Caco-2 (cell line): ENCODE measurements at regions of chr14 and their contacts with region 1.

Region 1: GRCh38 chr14:67619446-67620216 is at the start of gene ARG2:
- DNase-seq: peak; percentile 99
- H3K4me3 ChIP-seq: peak within 1 kb of the TSS; percentile 63
- H3K4me3 Mint-ChIP-seq: peak within 1 kb of the TSS; percentile 90
- H3K27ac Mint-ChIP-seq: peak within 1 kb of the TSS; percentile 97
- H3K4me1 ChIP-seq: peaks cover 5% of the 10 kb centered on the region; the same call in 1 of the 2 replicates
- H3K4me1 Mint-ChIP-seq: peaks cover 16% of the 10 kb centered on the region
- H3K27me3 ChIP-seq: no peaks in the 10 kb centered on the region
- H3K27me3 Mint-ChIP-seq: peaks cover 2% of the 10 kb centered on the region
- CTCF ChIP-seq: peak in 1 of 2 experiments; percentile 26
- total RNA-seq, gene ARG2: 22.6 and 22.8 TPM in 2 replicates

Region 2: DNA sequence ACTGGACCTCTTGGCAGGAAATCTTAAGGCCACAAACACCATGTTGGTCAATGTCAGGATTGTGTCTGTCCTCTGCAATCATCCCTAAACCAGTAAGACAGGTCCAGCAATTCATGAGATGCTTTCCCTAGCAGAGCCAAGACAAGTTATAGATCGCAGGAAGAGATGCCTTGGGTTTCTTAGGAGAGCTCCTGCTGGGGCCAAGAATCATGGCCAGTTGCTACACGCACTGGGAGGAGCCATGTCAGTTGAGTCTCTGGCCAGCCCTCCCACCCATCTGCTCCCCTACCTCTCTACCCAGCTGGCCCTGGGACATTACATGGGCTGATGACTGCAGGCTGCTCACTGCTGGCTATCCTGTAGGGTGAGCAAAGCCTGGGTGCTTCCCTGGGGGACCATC is 72.3 kb before region 1 on chr14:
- CTCF ChIA-PET with region 1: no interaction called
- POLR2A ChIA-PET with region 1: no interaction called
- intact Hi-C with region 1: no loop called
- DNase-seq: no peak
- H3K4me3 ChIP-seq: no peak overlapping the region
- H3K4me3 Mint-ChIP-seq: no peak overlapping the region
- H3K27ac Mint-ChIP-seq: no peak overlapping the region
- H3K4me1 ChIP-seq: 0 out of 2 replicates have a peak, but pooled peaks cover 1% of the 10 kb centered on the region
- H3K4me1 Mint-ChIP-seq: no peaks in the 10 kb centered on the region
- H3K27me3 ChIP-seq: no peaks in the 10 kb centered on the region
- H3K27me3 Mint-ChIP-seq: no peaks in the 10 kb centered on the region
- CTCF ChIP-seq: no peak

Region 3: GRCh38 chr14:67583711-67584644 is 35.7 kb before region 1 on chr14:
- CTCF ChIA-PET with region 1: no interaction called
- POLR2A ChIA-PET with region 1: no interaction called
- intact Hi-C with region 1: loop called (anchors 1 kb)
- DNase-seq: peak; percentile 62 to 73
- H3K4me3 ChIP-seq: no peak overlapping the region
- H3K4me3 Mint-ChIP-seq: no peak overlapping the region
- H3K27ac Mint-ChIP-seq: no peak overlapping the region
- H3K4me1 ChIP-seq: peaks cover 13% of the 10 kb centered on the region
- H3K4me1 Mint-ChIP-seq: no peaks in the 10 kb centered on the region
- H3K27me3 ChIP-seq: no peaks in the 10 kb centered on the region
- H3K27me3 Mint-ChIP-seq: no peaks in the 10 kb centered on the region
- CTCF ChIP-seq: peak; percentile 78 to 82

Region 4: GRCh38 chr14:67650694-67651093 is 31.1 kb after region 1 on chr14:
- CTCF ChIA-PET with region 1: interaction called, 3 read pairs
- POLR2A ChIA-PET with region 1: no interaction called
- intact Hi-C with region 1: loop called (anchors 1 kb)
- DNase-seq: no peak
- H3K4me3 ChIP-seq: no peak overlapping the region
- H3K4me3 Mint-ChIP-seq: no peak overlapping the region
- H3K27ac Mint-ChIP-seq: no peak overlapping the region
- H3K4me1 ChIP-seq: 0 out of 2 replicates have a peak, but pooled peaks cover 6% of the 10 kb centered on the region
- H3K4me1 Mint-ChIP-seq: no peaks in the 10 kb centered on the region
- H3K27me3 ChIP-seq: no peaks in the 10 kb centered on the region
- H3K27me3 Mint-ChIP-seq: no peaks in the 10 kb centered on the region
- CTCF ChIP-seq: no peak

Region 5: GRCh38 chr14:67666750-67667449 is 47.3 kb after region 1 on chr14:
- CTCF ChIA-PET with region 1: interaction called, 47 read pairs
- POLR2A ChIA-PET with region 1: interaction called, 4 read pairs
- intact Hi-C with region 1: loop called (anchors 1 kb)
- DNase-seq: peak in 1 of 2 experiments; percentile 45
- H3K4me3 ChIP-seq: no peak overlapping the region
- H3K4me3 Mint-ChIP-seq: no peak overlapping the region
- H3K27ac Mint-ChIP-seq: no peak overlapping the region
- H3K4me1 ChIP-seq: no peaks in the 10 kb centered on the region
- H3K4me1 Mint-ChIP-seq: no peaks in the 10 kb centered on the region
- H3K27me3 ChIP-seq: no peaks in the 10 kb centered on the region
- H3K27me3 Mint-ChIP-seq: no peaks in the 10 kb centered on the region
- CTCF ChIP-seq: peak; percentile 58 to 62

Region 6: DNA sequence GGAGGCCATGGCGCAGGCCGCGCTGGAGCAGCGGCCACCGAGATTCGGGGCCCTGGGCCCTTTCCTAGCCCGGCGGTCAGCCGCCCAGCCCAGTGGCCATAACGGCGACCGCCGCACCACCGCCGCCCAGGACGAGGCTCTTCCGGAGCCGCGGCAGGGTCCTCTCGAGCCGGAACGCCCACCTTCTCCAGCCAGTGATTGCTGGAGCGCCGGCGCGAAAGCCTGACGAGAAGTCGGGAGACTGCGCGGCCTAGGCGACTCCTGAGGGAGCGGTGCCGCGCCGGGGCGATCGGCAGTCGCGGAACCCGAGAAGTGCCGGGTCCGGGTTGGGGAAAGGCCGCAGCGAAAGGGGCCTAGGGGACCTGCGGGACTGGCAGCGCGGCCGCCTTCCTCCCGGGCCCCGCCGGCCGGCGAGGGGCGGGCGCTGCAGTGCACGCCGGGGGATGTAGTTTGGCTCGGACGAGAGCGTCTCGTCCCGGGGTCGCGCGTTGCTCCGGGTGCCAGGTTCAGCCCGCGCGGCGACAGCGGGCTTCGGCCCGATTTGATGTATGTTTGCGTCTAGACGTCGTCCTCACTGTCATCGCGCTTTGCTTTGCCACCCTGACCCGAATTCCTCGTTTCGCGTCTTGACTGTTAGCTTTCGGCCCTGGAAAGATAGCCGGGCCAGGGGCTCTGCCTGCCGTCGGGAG is 55.0 kb after region 1 on chr14 and contains the start of gene VTI1B:
- CTCF ChIA-PET with region 1: interaction called, 4 read pairs
- POLR2A ChIA-PET with region 1: no interaction called
- intact Hi-C with region 1: loop called (anchors 2 kb)
- DNase-seq: peak; percentile 82 to 88
- H3K4me3 ChIP-seq: peak within 1 kb of the TSS; percentile 96
- H3K4me3 Mint-ChIP-seq: peak within 1 kb of the TSS; percentile 91
- H3K27ac Mint-ChIP-seq: peak within 1 kb of the TSS; percentile 85
- H3K4me1 ChIP-seq: no peaks in the 10 kb centered on the region; the same call in 1 of the 2 replicates
- H3K4me1 Mint-ChIP-seq: peaks cover 15% of the 10 kb centered on the region
- H3K27me3 ChIP-seq: no peaks in the 10 kb centered on the region
- H3K27me3 Mint-ChIP-seq: no peaks in the 10 kb centered on the region
- CTCF ChIP-seq: peak in 1 of 2 experiments; percentile 40
- total RNA-seq, gene VTI1B: 102 and 117 TPM in 2 replicates

Region 7: GRCh38 chr14:67695394-67695949 is 75.8 kb after region 1 on chr14 and contains the start of gene RDH11:
- CTCF ChIA-PET with region 1: interaction called, 3 read pairs
- POLR2A ChIA-PET with region 1: interaction called, 7 read pairs
- intact Hi-C with region 1: loop called (anchors 2 kb)
- DNase-seq: peak; percentile 89 to 91
- H3K4me3 ChIP-seq: peak within 1 kb of the TSS; percentile 50
- H3K4me3 Mint-ChIP-seq: peak within 1 kb of the TSS; percentile 100
- H3K27ac Mint-ChIP-seq: peak within 1 kb of the TSS; percentile 99
- H3K4me1 ChIP-seq: 0 out of 2 replicates have a peak, but pooled peaks cover 7% of the 10 kb centered on the region
- H3K4me1 Mint-ChIP-seq: peaks cover 6% of the 10 kb centered on the region
- H3K27me3 ChIP-seq: no peaks in the 10 kb centered on the region
- H3K27me3 Mint-ChIP-seq: no peaks in the 10 kb centered on the region
- CTCF ChIP-seq: no peak
- total RNA-seq, gene RDH11: 80.2 and 83.1 TPM in 2 replicates

Region 8: DNA sequence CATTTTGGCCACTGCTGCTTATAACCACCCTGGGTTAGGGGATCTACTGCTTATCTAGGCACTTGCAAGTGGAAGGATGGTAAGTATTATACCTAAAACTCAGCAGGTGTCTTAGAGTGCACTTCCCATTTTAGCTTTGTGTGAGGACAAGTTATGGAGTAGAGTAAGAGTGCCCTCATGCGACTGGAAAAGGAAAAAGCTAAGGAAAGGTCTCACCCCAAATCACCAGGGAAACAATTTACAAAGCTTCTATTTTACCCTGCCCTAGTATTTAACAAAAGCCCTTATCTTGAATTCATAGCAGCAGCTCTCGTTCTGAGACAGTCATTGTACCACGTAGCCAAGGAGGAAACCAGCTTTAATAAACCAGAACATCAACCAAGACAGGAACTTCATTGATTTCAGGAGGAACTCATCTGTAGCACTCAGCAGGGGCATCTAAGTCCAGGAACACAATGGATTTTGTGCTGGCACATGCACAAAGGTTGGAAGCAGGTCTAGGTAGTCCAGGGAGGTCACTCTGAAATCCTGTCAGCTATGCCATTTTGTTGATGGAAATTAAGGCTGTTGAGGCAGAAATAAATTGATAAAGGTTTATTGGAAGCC is 85.0 kb after region 1 on chr14:
- CTCF ChIA-PET with region 1: interaction called, 40 read pairs
- POLR2A ChIA-PET with region 1: interaction called, 4 read pairs
- intact Hi-C with region 1: loop called (anchors 1 kb)
- DNase-seq: peak in 1 of 2 experiments; percentile 64
- H3K4me3 ChIP-seq: no peak overlapping the region
- H3K4me3 Mint-ChIP-seq: no peak overlapping the region
- H3K27ac Mint-ChIP-seq: no peak overlapping the region
- H3K4me1 ChIP-seq: no peaks in the 10 kb centered on the region
- H3K4me1 Mint-ChIP-seq: no peaks in the 10 kb centered on the region
- H3K27me3 ChIP-seq: no peaks in the 10 kb centered on the region
- H3K27me3 Mint-ChIP-seq: no peaks in the 10 kb centered on the region
- CTCF ChIP-seq: peak; percentile 73 to 78

Region 9: DNA sequence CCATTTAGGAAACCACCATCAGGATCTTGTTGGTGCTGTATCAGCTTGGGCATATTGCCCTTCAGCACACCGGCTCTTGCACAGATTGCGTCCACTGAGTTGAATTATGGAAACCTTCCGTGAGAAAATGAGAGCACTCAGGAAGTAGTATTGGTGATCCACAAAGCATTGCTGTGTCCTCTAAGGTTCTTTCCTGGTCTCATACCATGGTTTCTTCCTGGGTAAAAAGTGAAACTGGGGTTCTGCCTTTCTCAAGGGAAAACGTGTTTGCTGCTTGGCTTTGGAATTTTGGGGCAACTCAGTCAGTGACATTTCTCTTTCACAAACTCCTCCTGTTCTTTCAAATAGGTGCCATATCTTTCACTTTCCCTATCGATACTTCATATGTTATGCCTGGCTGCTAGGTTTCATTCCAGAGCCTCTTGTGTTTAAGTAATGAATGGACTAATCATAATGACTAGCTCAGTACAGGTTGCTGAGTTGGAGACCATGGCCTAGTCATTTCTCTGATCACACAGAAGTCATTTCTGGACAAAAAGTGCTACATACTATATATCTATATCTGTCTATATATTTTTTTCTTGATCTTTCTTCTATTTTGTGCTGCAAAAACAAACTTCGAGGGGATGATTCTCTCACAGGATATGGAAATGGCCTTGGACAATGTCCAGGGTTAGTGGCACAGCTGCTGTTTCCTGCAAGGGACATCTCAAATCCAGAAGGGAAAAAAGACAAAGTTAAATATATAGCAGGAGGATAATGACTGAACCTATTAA is 749.8 kb after region 1 on chr14:
- CTCF ChIA-PET with region 1: no interaction called
- POLR2A ChIA-PET with region 1: no interaction called
- intact Hi-C with region 1: no loop called
- DNase-seq: no peak
- H3K4me3 ChIP-seq: no peak overlapping the region
- H3K4me3 Mint-ChIP-seq: no peak overlapping the region
- H3K27ac Mint-ChIP-seq: no peak overlapping the region
- H3K4me1 ChIP-seq: peaks cover 26% of the 10 kb centered on the region
- H3K4me1 Mint-ChIP-seq: peaks cover 37% of the 10 kb centered on the region
- H3K27me3 ChIP-seq: no peaks in the 10 kb centered on the region
- H3K27me3 Mint-ChIP-seq: no peaks in the 10 kb centered on the region
- CTCF ChIP-seq: no peak